ENCODE measurements at regions of chr16 and their contacts with region 1.

Region 1: DNA sequence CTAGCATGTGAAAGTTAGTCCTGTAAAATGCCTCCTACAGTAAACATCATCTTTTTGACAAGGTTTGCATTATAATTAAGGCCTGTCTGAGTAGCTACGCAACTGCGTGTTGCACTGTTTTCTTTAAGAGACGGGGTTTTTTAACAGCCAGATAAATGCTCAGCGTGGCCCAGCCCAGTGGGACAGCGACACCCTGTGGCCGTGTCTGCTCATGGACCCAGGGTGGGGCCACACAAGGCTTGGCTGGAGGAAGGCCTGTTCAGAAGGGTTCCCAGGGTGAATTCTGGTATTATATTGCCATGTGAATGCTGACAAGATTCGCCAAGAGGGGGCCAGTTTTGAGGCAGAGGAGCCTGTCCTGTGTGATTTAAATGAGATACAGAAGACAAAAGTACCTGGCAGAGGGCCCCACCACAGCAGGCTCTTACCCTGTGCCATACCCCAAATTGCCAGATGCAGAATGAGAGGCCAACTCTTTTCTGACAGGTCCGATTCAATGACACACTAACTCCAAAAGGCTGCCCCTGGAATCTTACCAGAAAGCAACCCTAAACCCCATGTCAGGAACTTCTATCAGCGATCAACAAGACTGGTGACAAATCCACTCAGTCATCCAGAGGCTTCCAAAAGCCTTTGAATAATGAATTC is 65.9 kb upstream of the IRX6 start:
- DNase-seq: peak; percentile 23 to 64 (median 35)
- ATAC-seq: peak in 3 of 4 donors; percentile 71 to 82 (median 78)
- H3K4me3 ChIP-seq: no peak overlapping the region
- H3K27ac ChIP-seq: no peak overlapping the region
- H3K4me1 ChIP-seq: peaks cover 0 to under 1% (median 0%) of the 10 kb centered on the region in 12 donors
- H3K27me3 ChIP-seq: no peaks in the 10 kb centered on the region
- CTCF ChIP-seq: peak; percentile 36 to 68 (median 52)
- POLR2A ChIP-seq: no peak

Region 2: DNA sequence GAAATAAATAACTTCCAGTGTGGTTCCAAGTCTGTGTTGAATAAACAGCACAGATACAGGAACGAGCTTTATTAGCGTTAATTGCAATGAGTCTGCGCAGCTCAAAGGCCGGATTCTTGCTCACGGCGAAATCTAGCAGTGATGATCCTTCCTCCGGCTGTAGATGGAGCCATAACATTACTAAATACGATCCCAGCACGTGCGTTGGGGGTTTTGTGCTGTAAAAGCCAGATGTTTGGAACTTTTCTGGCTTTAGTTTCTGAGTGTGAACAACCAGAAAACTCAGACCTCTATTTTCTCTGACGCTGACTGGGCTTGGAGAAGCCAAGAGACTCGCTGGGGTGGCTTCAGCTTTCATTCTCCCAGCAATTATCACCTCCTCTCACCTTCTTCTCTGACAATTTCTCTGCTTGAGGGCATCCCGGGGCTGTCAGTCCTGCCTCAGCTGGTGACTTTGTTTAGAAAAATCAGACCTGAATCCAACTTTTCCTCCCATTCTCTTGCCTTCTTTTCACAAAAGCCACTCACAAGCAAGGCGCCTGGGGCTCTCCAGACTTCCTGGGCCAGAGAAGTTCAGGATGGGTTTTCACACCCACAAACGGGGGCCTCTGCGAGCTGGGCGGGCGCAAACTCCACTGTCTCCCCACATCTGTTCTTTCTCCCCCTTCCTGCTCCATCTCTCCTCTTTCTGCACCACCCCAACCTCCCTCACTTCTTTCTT is 1708.0 kb before region 1 on chr16:
- intact Hi-C with region 1: loop called in 1 of 10 experiments (anchors 10 kb)
- DNase-seq: peak in 4 of 5 donors; percentile 39 to 57 (median 50)
- ATAC-seq: peak; percentile 76 to 91 (median 90)
- H3K4me3 ChIP-seq: no peak overlapping the region
- H3K27ac ChIP-seq: no peak overlapping the region
- H3K4me1 ChIP-seq: peaks cover 0 to 9% (median 2%) of the 10 kb centered on the region in 12 donors
- H3K27me3 ChIP-seq: peaks cover 0 to 6% (median 0%) of the 10 kb centered on the region in 9 donors
- CTCF ChIP-seq: peak; percentile 27 to 84 (median 71)
- POLR2A ChIP-seq: no peak

Region 3: GRCh38 chr16:55207693-55208428 is 50.2 kb before region 1 on chr16:
- intact Hi-C with region 1: no loop called
- DNase-seq: no peak
- ATAC-seq: no peak
- H3K4me3 ChIP-seq: no peak overlapping the region
- H3K27ac ChIP-seq: no peak overlapping the region
- H3K4me1 ChIP-seq: no peaks in the 10 kb centered on the region
- H3K27me3 ChIP-seq: no peaks in the 10 kb centered on the region
- CTCF ChIP-seq: no peak
- POLR2A ChIP-seq: no peak

Measured in heart left ventricle (tissue), 16 donors.